Stomach (tissue), 19 donors: ENCODE measurements at regions of chr5 and their contacts with region 1.

Region 1: DNA sequence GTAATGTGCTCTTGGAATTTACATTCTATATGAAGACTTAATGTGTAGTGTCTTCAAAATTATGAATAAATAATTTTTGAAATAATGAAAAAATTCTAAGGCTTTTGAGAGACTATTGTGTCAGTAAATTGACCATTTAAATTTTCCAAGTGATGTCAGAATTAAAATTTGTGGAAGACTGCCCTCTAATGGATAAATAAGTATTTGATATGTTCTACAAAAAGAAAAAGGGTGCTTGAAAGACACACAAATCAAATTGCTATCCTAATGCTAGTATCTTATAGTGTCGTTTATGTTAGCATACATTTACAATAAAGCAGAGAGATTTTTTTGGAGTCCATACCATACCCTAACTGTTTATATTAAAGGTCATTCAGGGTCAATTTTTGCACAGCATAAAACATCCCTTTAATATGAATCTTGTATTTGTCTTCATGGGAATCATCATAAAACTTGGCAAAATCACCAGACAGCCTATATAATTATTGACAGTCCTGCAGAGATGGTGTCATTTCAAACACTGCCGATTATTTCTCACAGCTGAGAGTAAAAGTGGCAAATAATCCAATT is 120.8 kb upstream of the SLC27A6 start:
- DNase-seq: peak in 1 of 2 donors; percentile 58
- H3K4me3 ChIP-seq: no peak overlapping the region
- H3K27ac ChIP-seq: no peak overlapping the region
- H3K4me1 ChIP-seq: no peaks in the 10 kb centered on the region
- H3K27me3 ChIP-seq: no peaks in the 10 kb centered on the region
- CTCF ChIP-seq: peak in 3 of 7 experiments; percentile 12 to 27 (median 18)
- EP300 ChIP-seq: no peak
- POLR2A ChIP-seq: no peak

Region 2: DNA sequence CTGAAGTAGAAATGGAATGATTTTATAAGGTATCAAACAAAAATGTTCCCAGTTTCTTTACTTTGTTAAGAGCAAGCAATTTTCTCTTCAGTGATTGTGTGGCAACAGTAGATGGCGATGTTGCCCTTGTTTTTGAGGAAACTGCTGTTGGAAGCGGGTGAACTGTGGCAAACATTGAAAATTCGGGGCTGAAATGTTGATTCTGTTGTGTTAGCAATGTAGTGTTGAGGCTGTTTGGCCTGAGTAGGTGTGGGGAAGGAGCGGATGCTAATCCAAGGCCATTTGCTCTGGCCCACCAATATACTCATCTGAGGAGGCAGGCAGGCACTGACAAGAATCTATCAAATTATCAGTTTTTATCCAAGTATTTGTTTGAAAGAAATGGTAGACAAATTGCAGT is 631.1 kb before region 1 on chr5:
- intact Hi-C with region 1: loop called (anchors 10 kb)
- DNase-seq: peak; percentile 50 to 91
- H3K4me3 ChIP-seq: no peak overlapping the region
- H3K27ac ChIP-seq: no peak overlapping the region
- H3K4me1 ChIP-seq: peaks cover 0 to 7% (median 3%) of the 10 kb centered on the region in 4 donors
- H3K27me3 ChIP-seq: no peaks in the 10 kb centered on the region
- CTCF ChIP-seq: peak in 5 of 7 experiments; percentile 43 to 74 (median 62)
- EP300 ChIP-seq: no peak
- POLR2A ChIP-seq: no peak

Region 3: DNA sequence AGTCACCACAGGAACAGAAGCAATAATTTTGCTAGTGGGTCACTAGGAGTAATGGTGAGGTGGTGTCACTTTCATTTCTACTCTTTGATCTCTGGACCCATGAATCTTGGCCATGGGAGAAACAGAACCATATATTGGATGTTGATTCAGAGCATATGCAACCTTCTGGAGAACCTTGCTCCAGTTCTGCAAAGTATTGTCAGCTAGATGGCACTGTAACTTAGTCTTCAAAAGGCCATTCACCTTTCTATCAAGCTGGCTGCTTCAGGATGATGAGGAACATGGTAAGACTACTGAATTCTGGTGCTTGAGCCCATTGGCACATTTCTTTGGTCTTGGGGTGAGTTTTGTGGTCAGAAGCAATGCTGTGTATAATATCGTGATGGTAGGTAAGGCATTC is 177.3 kb before region 1 on chr5:
- intact Hi-C with region 1: loop called (anchors 10 kb)
- DNase-seq: peak in 1 of 2 donors; percentile 53
- H3K4me3 ChIP-seq: no peak overlapping the region
- H3K27ac ChIP-seq: no peak overlapping the region
- H3K4me1 ChIP-seq: no peaks in the 10 kb centered on the region
- H3K27me3 ChIP-seq: no peaks in the 10 kb centered on the region
- CTCF ChIP-seq: peak in 2 of 7 experiments; percentile 20 to 31
- EP300 ChIP-seq: no peak
- POLR2A ChIP-seq: no peak